ENCODE measurements at regions of chr3 and their contacts with region 1.

Region 1: DNA sequence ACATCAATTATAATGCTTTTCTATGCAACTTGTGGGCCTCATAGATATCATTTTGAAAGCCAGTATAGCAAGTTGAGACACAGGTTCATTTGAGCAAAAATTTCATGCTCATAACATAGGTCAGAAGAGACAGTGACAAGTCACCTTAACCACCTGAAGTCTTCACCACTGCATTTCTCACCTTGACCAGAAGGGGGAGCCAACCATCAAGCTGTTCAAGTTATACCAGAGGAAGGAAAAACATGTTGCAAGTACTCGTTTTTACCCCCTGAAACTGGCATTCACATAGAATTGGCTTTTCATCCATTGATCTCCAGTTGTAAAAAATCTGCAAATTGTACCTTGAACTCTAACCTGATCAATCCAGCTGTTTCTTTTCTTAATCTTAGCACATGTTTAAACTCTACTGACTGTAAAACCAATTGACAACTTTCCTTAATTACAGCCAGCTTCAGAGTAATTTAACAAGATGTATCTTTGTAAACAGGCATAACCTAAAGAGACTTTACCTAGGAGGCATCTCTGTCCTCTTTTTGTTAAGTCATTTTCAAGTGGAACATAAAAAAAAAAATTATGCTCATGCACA is 1.4 kb downstream of the LMOD3 start:
- DNase-seq: peak; percentile 75 to 80 (median 79)
- H3K4me3 ChIP-seq: no peak overlapping the region
- H3K4me3 Mint-ChIP-seq: no peak overlapping the region
- H3K27ac ChIP-seq: no peak overlapping the region
- H3K27ac Mint-ChIP-seq: no peak overlapping the region
- H3K4me1 ChIP-seq: no peaks in the 10 kb centered on the region
- H3K4me1 Mint-ChIP-seq: peaks cover 5% of the 10 kb centered on the region in 4 donors
- H3K27me3 ChIP-seq: no peaks in the 10 kb centered on the region
- H3K27me3 Mint-ChIP-seq: peaks cover 0 to 1% of the 10 kb centered on the region in 2 donors

Region 2: DNA sequence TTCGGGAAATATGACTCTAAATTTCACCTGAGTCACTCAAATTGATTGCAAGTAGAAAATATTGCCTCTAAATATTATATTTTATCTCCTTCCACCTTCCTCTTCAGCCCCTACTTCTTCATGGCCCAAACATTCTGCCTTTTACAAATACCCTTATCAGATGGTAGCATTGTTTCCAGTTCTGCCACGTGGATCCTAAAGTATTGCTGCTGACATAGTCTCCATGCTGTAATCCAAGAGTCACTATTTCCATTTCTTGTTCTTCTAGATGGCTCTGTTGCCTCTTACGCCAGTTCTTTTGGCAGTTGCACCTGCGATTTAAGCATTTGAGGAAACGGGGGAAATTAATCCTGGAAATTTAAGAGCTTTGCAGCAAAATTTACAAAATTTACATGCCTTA is 12.2 kb before region 1 on chr3:
- CTCF ChIA-PET with region 1: interaction called, 20 read pairs
- POLR2A ChIA-PET with region 1: no interaction called
- intact Hi-C with region 1: no loop called
- DNase-seq: no peak
- H3K4me3 ChIP-seq: no peak overlapping the region
- H3K4me3 Mint-ChIP-seq: no peak overlapping the region
- H3K27ac ChIP-seq: no peak overlapping the region
- H3K27ac Mint-ChIP-seq: peak overlapping the region in 5 of 7 donors; percentile 10 to 63 (median 43)
- H3K4me1 ChIP-seq: peaks cover 15% of the 10 kb centered on the region
- H3K4me1 Mint-ChIP-seq: peaks cover 14 to 26% (median 20%) of the 10 kb centered on the region in 4 donors
- H3K27me3 ChIP-seq: no peaks in the 10 kb centered on the region
- H3K27me3 Mint-ChIP-seq: no peaks in the 10 kb centered on the region

Region 3: DNA sequence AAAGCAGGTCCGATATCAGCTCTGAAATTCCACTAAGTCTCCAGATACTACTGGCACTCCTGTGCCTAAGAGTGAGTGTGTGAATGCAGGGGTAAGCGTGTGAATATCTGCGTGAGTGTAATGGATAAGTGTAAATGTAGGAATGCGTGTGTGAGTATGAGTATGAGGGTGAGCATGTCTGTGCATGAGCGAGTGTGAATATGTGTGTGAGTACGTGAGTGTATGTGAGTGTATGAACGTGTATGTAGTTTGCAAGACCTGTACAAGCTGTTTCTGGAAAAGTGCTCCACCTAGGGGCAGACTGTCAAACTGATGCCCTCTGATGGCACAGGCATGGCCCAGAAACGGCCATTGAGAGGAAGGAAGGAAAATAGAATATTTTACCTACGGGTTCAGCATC is 289.3 kb after region 1 on chr3:
- CTCF ChIA-PET with region 1: interaction called, 3 read pairs
- POLR2A ChIA-PET with region 1: no interaction called
- intact Hi-C with region 1: loop called (anchors 1 kb)
- DNase-seq: peak; percentile 48 to 63 (median 56)
- H3K4me3 ChIP-seq: no peak overlapping the region
- H3K4me3 Mint-ChIP-seq: no peak overlapping the region
- H3K27ac ChIP-seq: no peak overlapping the region
- H3K27ac Mint-ChIP-seq: no peak overlapping the region
- H3K4me1 ChIP-seq: no peaks in the 10 kb centered on the region
- H3K4me1 Mint-ChIP-seq: peaks cover 4 to 7% (median 5%) of the 10 kb centered on the region in 4 donors
- H3K27me3 ChIP-seq: no peaks in the 10 kb centered on the region
- H3K27me3 Mint-ChIP-seq: peaks cover 2 to 3% of the 10 kb centered on the region in 2 donors

Region 4: DNA sequence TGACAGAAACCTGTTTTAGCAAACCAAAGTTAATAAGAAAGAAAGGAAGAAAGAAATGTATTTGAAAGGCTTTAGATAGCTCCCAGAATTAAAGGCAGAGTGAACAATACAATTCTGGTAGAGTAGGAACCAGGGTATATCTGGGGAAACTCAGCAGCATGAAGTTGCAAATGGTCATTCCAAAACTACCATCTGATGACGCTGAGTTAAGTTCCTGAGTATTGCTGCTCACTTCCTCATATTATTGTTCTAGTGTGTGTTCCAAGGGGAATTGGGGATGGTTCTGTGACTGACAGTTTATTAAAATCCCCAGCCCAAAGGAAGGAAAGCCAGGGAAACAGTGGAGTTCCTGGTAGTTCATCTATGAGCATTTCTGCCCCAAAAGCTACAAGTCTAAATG is 353.2 kb after region 1 on chr3:
- CTCF ChIA-PET with region 1: no interaction called
- POLR2A ChIA-PET with region 1: no interaction called
- intact Hi-C with region 1: no loop called
- DNase-seq: no peak
- H3K4me3 ChIP-seq: no peak overlapping the region
- H3K4me3 Mint-ChIP-seq: no peak overlapping the region
- H3K27ac ChIP-seq: no peak overlapping the region
- H3K27ac Mint-ChIP-seq: no peak overlapping the region
- H3K4me1 ChIP-seq: no peaks in the 10 kb centered on the region
- H3K4me1 Mint-ChIP-seq: no peaks in the 10 kb centered on the region
- H3K27me3 ChIP-seq: no peaks in the 10 kb centered on the region
- H3K27me3 Mint-ChIP-seq: peaks cover 5 to 13% of the 10 kb centered on the region in 2 donors

Measured in CD4-positive, alpha-beta memory T cell (primary cell).